PC-3 (cell line): ENCODE measurements at regions of chr3 and their contacts with region 1.

Region 1: GRCh38 chr3:86785386-86785785 is 205.6 kb downstream of the VGLL3 start:
- DNase-seq: peak; percentile 54
- ATAC-seq: peak; percentile 82
- H3K4me3 ChIP-seq: no peak overlapping the region
- H3K27ac ChIP-seq: no peak overlapping the region
- H3K4me1 ChIP-seq: peaks cover 10% of the 10 kb centered on the region
- H3K27me3 ChIP-seq: no peaks in the 10 kb centered on the region
- CTCF ChIP-seq: peak; percentile 71

Region 2: GRCh38 chr3:86723433-86723832 is 62.0 kb before region 1 on chr3:
- CTCF ChIA-PET with region 1: no interaction called
- POLR2A ChIA-PET with region 1: no interaction called
- intact Hi-C with region 1: no loop called
- DNase-seq: peak; percentile 41
- ATAC-seq: peak; percentile 97
- H3K4me3 ChIP-seq: no peak overlapping the region
- H3K27ac ChIP-seq: no peak overlapping the region
- H3K4me1 ChIP-seq: 0 out of 2 replicates have a peak, but pooled peaks cover 4% of the 10 kb centered on the region
- H3K27me3 ChIP-seq: no peaks in the 10 kb centered on the region
- CTCF ChIP-seq: no peak

Region 3: GRCh38 chr3:86951343-86951742 is 166.0 kb after region 1 on chr3:
- CTCF ChIA-PET with region 1: interaction called, 3 read pairs
- POLR2A ChIA-PET with region 1: no interaction called
- intact Hi-C with region 1: loop called (anchors 1 kb)
- DNase-seq: peak; percentile 83
- ATAC-seq: peak; percentile 77
- H3K4me3 ChIP-seq: no peak overlapping the region
- H3K27ac ChIP-seq: peak overlapping the region; percentile 31
- H3K4me1 ChIP-seq: peaks cover 41% of the 10 kb centered on the region
- H3K27me3 ChIP-seq: no peaks in the 10 kb centered on the region
- CTCF ChIP-seq: no peak

Region 4: GRCh38 chr3:86969500-86970189 is 184.3 kb after region 1 on chr3:
- CTCF ChIA-PET with region 1: no interaction called
- POLR2A ChIA-PET with region 1: no interaction called
- intact Hi-C with region 1: loop called (anchors 1 kb)
- DNase-seq: peak; percentile 82
- ATAC-seq: peak; percentile 84
- H3K4me3 ChIP-seq: no peak overlapping the region
- H3K27ac ChIP-seq: no peak overlapping the region
- H3K4me1 ChIP-seq: no peaks in the 10 kb centered on the region
- H3K27me3 ChIP-seq: no peaks in the 10 kb centered on the region
- CTCF ChIP-seq: peak; percentile 95

Region 5: GRCh38 chr3:87006844-87007439 is 221.6 kb after region 1 on chr3:
- CTCF ChIA-PET with region 1: no interaction called
- POLR2A ChIA-PET with region 1: no interaction called
- intact Hi-C with region 1: loop called (anchors 1 kb)
- DNase-seq: peak; percentile 51
- ATAC-seq: peak; percentile 49; the same call in 1 of the 2 replicates
- H3K4me3 ChIP-seq: no peak overlapping the region
- H3K27ac ChIP-seq: no peak overlapping the region
- H3K4me1 ChIP-seq: no peaks in the 10 kb centered on the region
- H3K27me3 ChIP-seq: no peaks in the 10 kb centered on the region
- CTCF ChIP-seq: peak; percentile 81